ENCODE measurements at regions of chr1 and their contacts with region 1.

Region 1: GRCh38 chr1:52141513-52142219 is at the start of gene ZFYVE9:
- DNase-seq: peak; percentile 90
- H3K4me3 ChIP-seq: peak within 1 kb of the TSS; percentile 73
- H3K27ac ChIP-seq: peak within 1 kb of the TSS; percentile 70
- H3K4me1 ChIP-seq: peaks cover 38% of the 10 kb centered on the region
- CTCF ChIP-seq: peak; percentile 69
- total RNA-seq, gene ZFYVE9: 5.6 and 9.4 TPM in 2 replicates

Region 2: DNA sequence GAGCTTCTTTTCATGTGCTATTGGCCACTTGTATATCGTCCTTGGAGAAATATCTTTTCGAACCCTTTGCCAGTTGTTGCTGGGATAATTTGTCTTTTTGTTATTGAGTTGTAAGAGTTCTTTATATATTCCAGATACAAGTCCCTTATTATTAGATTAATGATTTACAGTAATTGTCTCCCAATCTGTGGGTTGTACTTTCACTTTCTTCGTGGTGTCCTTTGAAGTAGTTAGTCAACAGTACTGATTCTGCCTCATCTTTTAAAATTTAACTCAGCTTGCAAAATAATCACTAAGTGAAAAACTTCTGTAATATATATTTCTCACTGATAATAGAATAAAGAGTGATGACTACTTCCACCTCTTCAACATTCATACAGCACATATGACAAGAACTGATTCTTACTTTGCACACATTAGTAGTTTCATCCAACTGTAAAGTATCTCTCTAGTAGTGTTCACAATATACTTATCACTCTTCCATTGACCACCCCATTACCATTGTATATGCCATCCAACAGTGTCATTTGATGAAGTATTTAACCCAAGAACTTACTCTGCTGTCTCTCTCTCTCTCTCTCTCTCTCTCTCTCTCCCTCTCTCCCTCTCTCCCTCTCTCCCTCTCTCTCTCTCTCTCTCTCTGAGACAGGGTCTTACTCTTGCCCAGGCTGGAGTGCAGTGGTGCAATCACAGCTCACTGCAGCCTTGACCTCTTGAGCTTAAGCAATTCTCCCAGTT is 1614.2 kb before region 1 on chr1:
- CTCF ChIA-PET with region 1: no interaction called
- POLR2A ChIA-PET with region 1: no interaction called
- intact Hi-C with region 1: no loop called
- DNase-seq: no peak
- H3K4me3 ChIP-seq: no peak overlapping the region
- H3K27ac ChIP-seq: no peak overlapping the region
- H3K4me1 ChIP-seq: no peaks in the 10 kb centered on the region
- CTCF ChIP-seq: no peak

Region 3: GRCh38 chr1:52636721-52637695 is 495.3 kb after region 1 on chr1:
- CTCF ChIA-PET with region 1: no interaction called
- POLR2A ChIA-PET with region 1: no interaction called
- intact Hi-C with region 1: loop called (anchors 2 kb)
- DNase-seq: peak; percentile 96
- H3K4me3 ChIP-seq: peak overlapping the region; percentile 53
- H3K27ac ChIP-seq: peak overlapping the region; percentile 96
- H3K4me1 ChIP-seq: peaks cover 77% of the 10 kb centered on the region
- CTCF ChIP-seq: no peak

Measured in OCI-LY7 (cell line).